Dorsolateral prefrontal cortex (tissue), 120 donors: ENCODE measurements at regions of chr2 and their contacts with region 1.

Region 1: DNA sequence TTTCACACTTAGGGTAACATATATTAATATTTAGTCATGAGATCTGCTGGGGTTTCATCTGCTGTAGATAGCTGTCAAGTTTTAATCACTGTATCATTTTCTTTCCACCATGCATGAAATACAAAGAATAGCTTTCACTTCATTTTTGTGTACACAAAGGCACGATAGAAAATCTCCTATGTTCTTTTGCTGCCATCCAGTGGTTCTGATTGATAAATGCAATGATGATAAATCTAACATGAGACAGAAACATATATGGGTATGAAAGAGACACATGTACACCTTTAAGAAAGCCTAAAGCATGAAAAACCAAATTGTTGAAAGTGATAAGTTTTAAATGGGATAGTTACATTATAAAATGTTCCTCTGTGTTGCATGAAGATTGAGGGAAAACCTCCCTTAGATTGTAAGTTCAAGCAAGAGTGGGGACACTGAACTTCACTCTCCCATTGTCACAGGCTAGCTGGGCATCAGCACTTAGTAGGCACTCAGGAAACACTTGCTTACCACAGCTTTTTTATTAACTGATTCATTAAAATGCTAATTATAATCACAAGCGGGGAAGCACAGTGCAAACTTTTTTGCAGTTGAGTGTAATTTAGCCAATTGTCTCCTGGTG is 31.2 kb downstream of the C1D start:
- DNase-seq: no peak
- H3K4me3 ChIP-seq: peak overlapping the region in 9 of 59 donors; percentile 6 to 41 (median 25)
- H3K27ac ChIP-seq: peak overlapping the region in 1 of 59 donors; percentile 9
- H3K27me3 ChIP-seq: peaks cover 0 to 3% (median 0%) of the 10 kb centered on the region in 45 donors
- CTCF ChIP-seq: peak; percentile 35 to 93 (median 76)

Region 2: DNA sequence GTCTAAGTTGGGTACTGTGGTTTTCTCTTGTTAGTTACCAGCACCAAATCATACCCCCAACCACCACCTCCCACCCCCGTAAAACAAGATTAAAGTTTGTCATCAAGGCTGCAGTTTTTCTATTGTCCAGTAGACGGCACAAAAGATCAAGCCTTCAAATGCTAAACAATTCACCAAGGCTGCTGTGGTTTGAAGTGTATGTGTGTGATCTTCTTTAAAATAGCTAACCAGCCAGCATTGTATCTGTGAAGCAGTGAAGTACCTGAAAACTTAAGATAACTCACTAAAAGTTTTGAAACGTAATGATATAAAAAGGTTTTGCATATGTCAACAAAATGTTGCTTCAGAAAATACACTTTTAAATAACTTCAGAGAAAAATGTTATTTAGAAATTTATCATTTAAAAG is 1602.6 kb before region 1 on chr2:
- intact Hi-C with region 1: loop called (anchors 5 to 10 kb)
- DNase-seq: no peak
- H3K4me3 ChIP-seq: no peak overlapping the region
- H3K27ac ChIP-seq: no peak overlapping the region
- H3K27me3 ChIP-seq: peaks cover 0 to 63% (median 47%) of the 10 kb centered on the region in 45 donors
- CTCF ChIP-seq: peak; percentile 59 to 92 (median 80)

Region 3: DNA sequence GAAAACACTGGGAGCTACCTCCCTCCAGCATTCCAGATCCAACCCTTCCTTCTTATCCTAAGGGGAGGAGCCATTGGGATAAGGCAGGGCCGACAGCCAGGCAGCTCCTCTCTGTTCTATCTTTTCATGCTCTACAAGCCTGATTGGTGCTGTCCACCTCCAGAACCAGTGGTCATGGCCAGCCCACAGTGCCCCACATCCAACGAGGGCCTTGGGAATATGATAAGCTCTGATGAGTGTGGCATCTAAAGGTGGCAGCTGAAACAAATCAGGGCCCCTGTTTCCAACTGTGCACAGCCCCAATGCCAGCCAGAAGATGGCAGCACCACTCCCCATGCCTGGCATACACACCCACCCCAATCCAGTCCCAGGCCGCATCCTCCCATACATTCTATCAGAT is 298.1 kb before region 1 on chr2:
- intact Hi-C with region 1: loop called in 1 of 2 experiments (anchors 10 kb)
- DNase-seq: peak in 3 of 10 donors; percentile 9 to 30 (median 21)
- H3K4me3 ChIP-seq: no peak overlapping the region
- H3K27ac ChIP-seq: no peak overlapping the region
- H3K27me3 ChIP-seq: peaks cover 0 to 9% (median 0%) of the 10 kb centered on the region in 45 donors
- CTCF ChIP-seq: peak in 48 of 56 donors; percentile 6 to 64 (median 39)

Region 4: DNA sequence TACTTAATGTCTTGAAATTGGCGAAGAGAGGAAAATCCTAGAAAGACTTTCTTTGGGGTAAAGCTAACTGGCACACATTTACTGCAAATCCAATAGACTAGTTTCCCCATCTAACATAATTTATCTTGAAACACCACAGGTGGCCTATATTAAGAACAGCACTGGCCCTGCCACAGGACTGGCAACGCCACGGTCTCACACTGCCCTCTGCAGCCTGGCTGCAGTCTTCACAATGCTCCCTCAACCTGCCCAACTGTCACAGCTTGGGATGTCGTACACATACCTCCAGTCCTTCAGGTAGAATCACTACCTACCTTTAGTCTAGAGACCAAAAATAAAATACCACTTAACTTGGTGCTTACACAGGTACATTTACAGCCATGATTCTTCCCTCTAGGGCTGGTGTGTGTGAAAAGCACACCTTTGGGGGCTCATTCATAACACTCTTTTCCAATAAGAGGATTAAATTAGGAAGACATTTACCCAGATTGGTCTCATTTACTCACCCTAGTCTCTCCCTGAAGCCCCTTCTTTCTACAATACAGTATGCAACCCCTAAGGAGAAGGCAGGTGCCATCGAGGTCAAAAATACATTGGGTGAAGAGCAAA is 191.1 kb before region 1 on chr2:
- intact Hi-C with region 1: loop called in 1 of 2 experiments (anchors 10 kb)
- DNase-seq: peak in 9 of 10 donors; percentile 31 to 69 (median 47)
- H3K4me3 ChIP-seq: no peak overlapping the region
- H3K27ac ChIP-seq: no peak overlapping the region
- H3K27me3 ChIP-seq: peaks cover 0 to 5% (median 0%) of the 10 kb centered on the region in 45 donors
- CTCF ChIP-seq: peak in 55 of 56 donors; percentile 26 to 79 (median 58)

Region 5: GRCh38 chr2:68368654-68369336 is 337.1 kb after region 1 on chr2:
- intact Hi-C with region 1: no loop called
- DNase-seq: peak in 8 of 10 donors; percentile 38 to 81 (median 64)
- H3K4me3 ChIP-seq: peak overlapping the region in 11 of 59 donors; percentile 0 to 38 (median 12)
- H3K27ac ChIP-seq: peak overlapping the region in 55 of 59 donors; percentile 3 to 89 (median 70)
- H3K27me3 ChIP-seq: no peaks in the 10 kb centered on the region
- CTCF ChIP-seq: no peak